Mammary epithelial cell (primary cell): ENCODE measurements at regions of chr15 and their contacts with region 1.

Region 1: DNA sequence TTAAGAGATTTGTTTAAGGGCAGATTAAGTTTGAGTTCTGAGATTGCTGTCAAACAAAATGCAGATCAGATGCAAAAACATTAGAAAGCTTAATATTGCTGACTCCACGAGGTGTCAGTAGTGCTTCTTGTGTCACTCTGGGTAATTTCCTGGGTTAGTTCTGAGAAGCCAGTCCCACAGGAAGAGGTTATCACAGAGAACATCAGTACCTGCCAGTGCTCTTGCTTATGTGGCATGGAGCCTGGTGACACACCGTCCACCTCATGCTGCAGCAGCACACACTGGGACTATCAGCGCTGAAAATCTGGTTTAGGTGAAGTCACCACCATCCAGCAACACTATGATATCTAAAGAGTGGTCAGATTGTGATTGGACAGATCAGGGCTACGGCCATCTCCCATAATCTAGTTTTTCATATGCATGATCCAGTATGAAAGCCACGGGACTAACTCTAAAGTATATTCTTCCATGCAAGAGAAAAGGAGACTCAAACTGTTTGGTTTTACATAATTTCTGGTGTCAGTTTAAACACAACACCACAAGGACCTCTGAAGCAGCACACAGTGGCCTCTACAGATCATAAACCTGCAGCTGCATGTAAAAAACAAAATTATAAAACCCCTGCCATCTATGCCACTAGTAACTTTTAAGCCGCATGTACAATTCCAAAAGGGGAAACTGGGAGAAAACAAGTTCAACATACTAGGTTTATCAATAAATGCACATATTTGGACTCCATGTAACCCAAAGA is 36.1 kb upstream of the MYO5C start:
- DNase-seq: peak; percentile 75
- H3K4me3 ChIP-seq: no peak overlapping the region
- H3K27ac ChIP-seq: no peak overlapping the region
- H3K4me1 ChIP-seq: peaks cover 25% of the 10 kb centered on the region
- H3K27me3 ChIP-seq: no peaks in the 10 kb centered on the region
- CTCF ChIP-seq: peak; percentile 65 to 66

Region 2: DNA sequence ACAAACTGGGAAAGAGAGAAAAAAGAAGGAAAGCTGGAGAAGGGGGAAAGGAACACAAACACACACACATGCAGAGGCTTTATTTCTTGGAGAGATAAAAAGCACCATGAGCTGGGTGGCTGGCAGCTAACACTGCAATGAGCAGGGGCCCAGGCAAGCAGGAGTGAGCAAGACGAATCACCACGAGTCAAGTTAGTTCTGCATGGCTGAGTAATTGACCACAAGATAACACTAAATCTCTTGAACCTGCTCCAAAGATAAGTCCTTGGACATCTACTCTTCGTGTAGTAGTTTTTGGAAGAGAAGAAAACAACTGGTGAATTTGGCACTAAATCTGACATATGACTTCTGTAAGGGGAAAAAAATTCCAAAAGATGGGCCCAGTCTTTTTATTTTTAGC is 96.1 kb after region 1 on chr15:
- CTCF ChIA-PET with region 1: no interaction called
- dilution Hi-C with region 1: no loop called
- in situ Hi-C with region 1: no loop called
- intact Hi-C with region 1: no loop called
- DNase-seq: peak; percentile 69
- H3K4me3 ChIP-seq: no peak overlapping the region
- H3K27ac ChIP-seq: no peak overlapping the region
- H3K4me1 ChIP-seq: peaks cover 7% of the 10 kb centered on the region
- H3K27me3 ChIP-seq: no peaks in the 10 kb centered on the region
- CTCF ChIP-seq: no peak

Region 3: DNA sequence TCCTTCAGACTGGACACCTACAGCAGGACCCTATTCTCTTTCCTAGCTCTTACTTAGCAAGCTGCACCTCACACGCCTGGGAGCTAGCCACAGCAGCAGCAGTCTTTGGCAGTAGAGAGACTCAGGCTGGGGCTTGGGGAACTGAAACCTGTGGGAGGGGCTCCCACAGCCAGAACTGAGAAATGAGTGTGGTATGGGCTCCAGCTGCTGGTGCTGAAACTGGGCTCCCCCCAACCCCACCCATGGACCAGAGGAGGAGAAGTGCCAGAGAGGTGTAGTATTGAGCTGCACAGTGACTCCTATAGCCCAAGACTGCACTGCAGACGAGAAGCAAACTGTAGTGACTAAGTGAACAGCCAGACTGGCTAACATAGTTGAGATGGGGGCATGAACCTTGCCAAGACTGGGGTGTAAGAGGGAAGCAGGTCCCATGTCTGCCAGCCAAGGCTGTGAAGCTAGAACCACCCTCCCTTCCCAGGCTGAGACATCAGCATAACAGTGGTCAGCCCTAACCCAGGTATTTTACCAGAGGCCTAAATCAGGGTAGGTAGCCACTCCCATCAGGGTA is 134.6 kb after region 1 on chr15:
- CTCF ChIA-PET with region 1: no interaction called
- dilution Hi-C with region 1: no loop called
- in situ Hi-C with region 1: no loop called
- intact Hi-C with region 1: loop called (anchors 1 kb)
- DNase-seq: no peak
- H3K4me3 ChIP-seq: no peak overlapping the region
- H3K27ac ChIP-seq: no peak overlapping the region
- H3K4me1 ChIP-seq: peaks cover 8% of the 10 kb centered on the region
- H3K27me3 ChIP-seq: no peaks in the 10 kb centered on the region
- CTCF ChIP-seq: no peak

Region 4: GRCh38 chr15:53209389-53210042 is 877.9 kb after region 1 on chr15:
- CTCF ChIA-PET with region 1: no interaction called
- dilution Hi-C with region 1: no loop called
- in situ Hi-C with region 1: no loop called
- intact Hi-C with region 1: loop called (anchors 5 kb)
- DNase-seq: peak; percentile 75
- H3K4me3 ChIP-seq: no peak overlapping the region
- H3K27ac ChIP-seq: peak overlapping the region; percentile 59
- H3K4me1 ChIP-seq: no peaks in the 10 kb centered on the region
- H3K27me3 ChIP-seq: no peaks in the 10 kb centered on the region
- CTCF ChIP-seq: no peak